ENCODE measurements at regions of chr3 and their contacts with region 1.

Region 1: GRCh38 chr3:38960953-38961622 is 90.7 kb downstream of the SCN11A start:
- DNase-seq: peak in 14 of 35 experiments; percentile 1 to 46 (median 15)
- ATAC-seq: peak in 3 of 4 experiments; percentile 39 to 63 (median 41)
- H3K4me3 ChIP-seq: no peak overlapping the region
- H3K4me3 Mint-ChIP-seq: no peak overlapping the region
- H3K27ac ChIP-seq: no peak overlapping the region
- H3K27ac Mint-ChIP-seq: no peak overlapping the region
- H3K4me1 ChIP-seq: no peaks in the 10 kb centered on the region
- H3K4me1 Mint-ChIP-seq: peaks cover 0 to 5% (median 3%) of the 10 kb centered on the region in 3 donors
- H3K27me3 ChIP-seq: no peaks in the 10 kb centered on the region
- H3K27me3 Mint-ChIP-seq: peaks cover 0 to 3% of the 10 kb centered on the region in 2 donors

Region 2: GRCh38 chr3:40891186-40891585 is 1930.1 kb after region 1 on chr3:
- CTCF ChIA-PET with region 1: no interaction called
- POLR2A ChIA-PET with region 1: interaction called in 1 of 2 experiments, 13 read pairs
- DNase-seq: no peak
- ATAC-seq: no peak
- H3K4me3 ChIP-seq: no peak overlapping the region
- H3K4me3 Mint-ChIP-seq: no peak overlapping the region
- H3K27ac ChIP-seq: no peak overlapping the region
- H3K27ac Mint-ChIP-seq: no peak overlapping the region
- H3K4me1 ChIP-seq: no peaks in the 10 kb centered on the region
- H3K4me1 Mint-ChIP-seq: no peaks in the 10 kb centered on the region
- H3K27me3 ChIP-seq: no peaks in the 10 kb centered on the region
- H3K27me3 Mint-ChIP-seq: peaks cover 4 to 9% of the 10 kb centered on the region in 2 donors

Measured in T-cell (primary cell).